ENCODE measurements at regions of chr9 and their contacts with region 1.

Region 1: DNA sequence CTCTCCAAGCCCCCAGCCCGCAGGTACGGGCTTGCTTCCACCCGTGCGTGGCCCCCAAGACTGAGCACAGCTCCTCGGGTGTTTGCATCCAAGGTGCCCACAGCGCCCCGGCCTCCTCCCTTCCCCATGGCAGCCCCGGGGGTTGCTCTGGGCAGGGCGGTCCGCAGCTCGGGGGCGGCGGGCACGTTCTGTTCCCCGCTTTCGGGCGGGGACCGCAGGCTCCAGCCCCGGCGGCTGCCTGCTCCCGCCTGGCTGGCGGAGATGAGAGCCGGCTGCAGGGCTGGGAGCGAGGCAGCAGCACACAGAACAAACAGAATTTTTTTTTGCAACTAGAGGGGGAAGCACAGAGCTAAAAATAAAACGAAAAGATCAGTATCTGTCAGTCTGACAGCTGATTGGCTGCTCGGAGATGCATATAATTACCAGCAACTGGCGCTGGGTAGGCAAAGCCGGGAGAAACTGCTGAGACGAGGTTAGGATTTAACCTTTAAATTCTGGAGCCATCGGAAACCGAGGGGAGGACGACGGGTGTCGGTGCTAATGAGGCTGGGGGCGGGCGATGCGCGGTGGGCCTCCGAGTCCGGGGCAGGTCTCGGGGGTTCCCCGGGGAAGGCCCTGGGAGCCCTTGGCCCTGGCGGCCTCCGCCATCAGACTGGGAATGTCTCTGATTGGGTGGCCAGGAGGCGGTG is 142.7 kb upstream of the IER5L start:
- DNase-seq: peak; percentile 41 to 81 (median 76)
- ATAC-seq: peak; percentile 96
- H3K4me3 ChIP-seq: peak overlapping the region; percentile 61
- H3K4me3 Mint-ChIP-seq: peak overlapping the region; percentile 74 to 94 (median 87)
- H3K27ac ChIP-seq: peak overlapping the region; percentile 63
- H3K27ac Mint-ChIP-seq: peak overlapping the region; percentile 70 to 96 (median 92)
- H3K4me1 ChIP-seq: peaks cover 12 to 17% of the 10 kb centered on the region in 2 donors
- H3K4me1 Mint-ChIP-seq: peaks cover 11 to 22% (median 13%) of the 10 kb centered on the region in 7 donors
- H3K27me3 ChIP-seq: no peaks in the 10 kb centered on the region
- H3K27me3 Mint-ChIP-seq: no peaks in the 10 kb centered on the region

Region 2: GRCh38 chr9:129160712-129161533 is 159.8 kb before region 1 on chr9:
- CTCF ChIA-PET with region 1: no interaction called
- POLR2A ChIA-PET with region 1: no interaction called
- intact Hi-C with region 1: no loop called
- DNase-seq: no peak
- ATAC-seq: no peak
- H3K4me3 ChIP-seq: no peak overlapping the region
- H3K4me3 Mint-ChIP-seq: no peak overlapping the region
- H3K27ac ChIP-seq: no peak overlapping the region
- H3K27ac Mint-ChIP-seq: peak overlapping the region in 1 of 9 donors; percentile 31
- H3K4me1 ChIP-seq: no peaks in the 10 kb centered on the region
- H3K4me1 Mint-ChIP-seq: peaks cover 0 to 6% (median 0%) of the 10 kb centered on the region in 7 donors
- H3K27me3 ChIP-seq: no peaks in the 10 kb centered on the region
- H3K27me3 Mint-ChIP-seq: no peaks in the 10 kb centered on the region

Region 3: DNA sequence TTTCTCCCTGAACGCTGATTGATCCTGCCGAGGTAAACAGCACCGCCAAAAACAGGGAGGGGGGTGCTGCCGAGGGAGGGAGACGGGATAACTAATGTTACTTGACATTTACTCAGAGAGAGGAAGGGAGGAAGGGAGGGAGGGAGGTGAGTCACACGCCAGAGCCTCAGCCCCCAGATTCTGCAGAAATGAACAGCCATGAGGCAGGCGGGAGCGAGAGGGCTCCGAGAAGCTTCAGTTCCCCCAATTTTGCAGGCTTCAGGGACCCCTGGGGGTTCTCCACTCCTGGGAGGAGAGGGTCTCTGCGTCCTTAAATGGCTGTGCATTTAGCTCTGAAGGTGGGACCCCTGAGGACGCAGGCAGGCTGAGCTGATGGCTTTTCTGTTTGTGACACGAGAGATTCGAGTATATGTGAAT is 83.5 kb before region 1 on chr9:
- CTCF ChIA-PET with region 1: no interaction called
- POLR2A ChIA-PET with region 1: interaction called, 6 read pairs
- intact Hi-C with region 1: loop called in 1 of 2 experiments (anchors 1 kb)
- DNase-seq: peak in 8 of 9 donors; percentile 12 to 61 (median 38)
- ATAC-seq: peak; percentile 45
- H3K4me3 ChIP-seq: peak overlapping the region; percentile 66
- H3K4me3 Mint-ChIP-seq: peak overlapping the region; percentile 87 to 97 (median 92)
- H3K27ac ChIP-seq: peak overlapping the region; percentile 77
- H3K27ac Mint-ChIP-seq: peak overlapping the region; percentile 85 to 98 (median 95)
- H3K4me1 ChIP-seq: peaks cover 35 to 36% of the 10 kb centered on the region in 2 donors
- H3K4me1 Mint-ChIP-seq: peaks cover 38 to 77% (median 71%) of the 10 kb centered on the region in 7 donors
- H3K27me3 ChIP-seq: no peaks in the 10 kb centered on the region
- H3K27me3 Mint-ChIP-seq: no peaks in the 10 kb centered on the region

Region 4: GRCh38 chr9:129333953-129334724 is 13.4 kb after region 1 on chr9:
- CTCF ChIA-PET with region 1: interaction called, 4 read pairs
- POLR2A ChIA-PET with region 1: interaction called, 11 read pairs
- intact Hi-C with region 1: loop called in 1 of 2 experiments (anchors 1 kb)
- DNase-seq: peak in 4 of 9 donors; percentile 28 to 36 (median 32)
- ATAC-seq: peak; percentile 67
- H3K4me3 ChIP-seq: no peak overlapping the region
- H3K4me3 Mint-ChIP-seq: peak overlapping the region; percentile 3 to 88 (median 78)
- H3K27ac ChIP-seq: peak overlapping the region; percentile 38
- H3K27ac Mint-ChIP-seq: peak overlapping the region; percentile 29 to 91 (median 83)
- H3K4me1 ChIP-seq: peaks cover 3 to 28% of the 10 kb centered on the region in 2 donors
- H3K4me1 Mint-ChIP-seq: peaks cover 17 to 41% (median 25%) of the 10 kb centered on the region in 7 donors
- H3K27me3 ChIP-seq: no peaks in the 10 kb centered on the region
- H3K27me3 Mint-ChIP-seq: peaks cover 0 to 8% (median 0%) of the 10 kb centered on the region in 5 donors

Region 5: GRCh38 chr9:129413537-129414376 is 93.0 kb after region 1 on chr9:
- CTCF ChIA-PET with region 1: no interaction called
- POLR2A ChIA-PET with region 1: no interaction called
- intact Hi-C with region 1: loop called in 1 of 2 experiments (anchors 1 kb)
- DNase-seq: peak; percentile 95 to 100 (median 98)
- ATAC-seq: peak; percentile 89
- H3K4me3 ChIP-seq: peak overlapping the region; percentile 76
- H3K4me3 Mint-ChIP-seq: peak overlapping the region; percentile 84 to 94 (median 90)
- H3K27ac ChIP-seq: peak overlapping the region; percentile 100
- H3K27ac Mint-ChIP-seq: peak overlapping the region; percentile 95 to 100 (median 99)
- H3K4me1 ChIP-seq: peaks cover 17 to 20% of the 10 kb centered on the region in 2 donors
- H3K4me1 Mint-ChIP-seq: peaks cover 5 to 43% (median 33%) of the 10 kb centered on the region in 7 donors
- H3K27me3 ChIP-seq: no peaks in the 10 kb centered on the region
- H3K27me3 Mint-ChIP-seq: peaks cover 0 to 2% (median 0%) of the 10 kb centered on the region in 5 donors

Region 6: GRCh38 chr9:129569502-129570449 is 249.1 kb after region 1 on chr9:
- CTCF ChIA-PET with region 1: no interaction called
- POLR2A ChIA-PET with region 1: no interaction called
- intact Hi-C with region 1: loop called in 1 of 2 experiments (anchors 1 kb)
- DNase-seq: no peak
- ATAC-seq: peak; percentile 53
- H3K4me3 ChIP-seq: peak overlapping the region; percentile 17
- H3K4me3 Mint-ChIP-seq: peak overlapping the region; percentile 67 to 87 (median 80)
- H3K27ac ChIP-seq: no peak overlapping the region
- H3K27ac Mint-ChIP-seq: peak overlapping the region in 3 of 9 donors; percentile 36 to 58 (median 40)
- H3K4me1 ChIP-seq: peaks cover 3 to 8% of the 10 kb centered on the region in 2 donors
- H3K4me1 Mint-ChIP-seq: peaks cover 11 to 23% (median 14%) of the 10 kb centered on the region in 7 donors
- H3K27me3 ChIP-seq: peaks cover 0 to 8% of the 10 kb centered on the region in 2 donors
- H3K27me3 Mint-ChIP-seq: peaks cover 14 to 30% (median 26%) of the 10 kb centered on the region in 5 donors